ENCODE measurements at regions of chr7 and their contacts with region 1.

Region 1: DNA sequence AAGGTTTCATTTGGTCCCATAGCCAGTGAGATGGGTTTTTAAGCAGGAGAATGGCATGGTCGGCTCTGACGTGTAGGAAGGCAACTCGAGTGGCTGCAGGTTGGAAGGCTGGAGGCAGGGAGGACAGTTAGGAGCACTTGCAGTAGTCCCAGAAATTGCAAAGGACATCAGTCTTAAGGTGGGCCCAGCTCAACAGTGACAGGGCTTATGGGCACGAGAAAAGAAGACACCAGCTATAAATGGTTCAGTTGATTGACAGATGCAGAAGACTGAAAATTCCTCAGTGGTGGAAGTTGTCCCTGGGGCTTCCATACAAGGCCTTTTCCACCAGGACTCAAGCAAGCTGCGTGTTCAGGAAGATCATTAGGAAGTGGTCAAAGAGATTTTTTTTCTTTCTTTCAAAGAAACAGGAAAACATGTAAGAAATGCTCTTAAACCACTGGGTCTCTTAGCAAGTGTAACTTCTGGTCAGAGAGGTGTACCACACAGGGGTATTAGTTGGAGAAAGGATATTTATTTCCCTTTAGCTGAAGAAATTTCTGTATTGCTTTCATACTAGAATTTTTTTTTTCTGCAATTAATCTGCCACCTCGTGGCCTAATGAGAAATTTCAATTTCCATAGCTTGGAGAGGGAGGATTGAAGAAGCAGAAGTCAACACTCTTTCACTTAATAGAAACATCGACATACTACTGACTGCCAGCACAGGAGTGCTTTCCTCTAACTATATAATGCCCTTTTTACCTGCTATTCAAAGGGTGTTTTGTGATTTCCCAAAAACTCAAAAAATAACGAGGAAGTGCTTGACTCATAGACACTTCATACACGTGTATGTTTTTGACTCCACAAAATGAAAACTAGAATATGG is 177.4 kb upstream of the NAMPT start:
- DNase-seq: peak in 1 of 2 experiments; percentile 29
- H3K4me3 ChIP-seq: no peak overlapping the region
- H3K4me1 ChIP-seq: no peaks in the 10 kb centered on the region
- H3K27me3 ChIP-seq: no peaks in the 10 kb centered on the region

Region 2: DNA sequence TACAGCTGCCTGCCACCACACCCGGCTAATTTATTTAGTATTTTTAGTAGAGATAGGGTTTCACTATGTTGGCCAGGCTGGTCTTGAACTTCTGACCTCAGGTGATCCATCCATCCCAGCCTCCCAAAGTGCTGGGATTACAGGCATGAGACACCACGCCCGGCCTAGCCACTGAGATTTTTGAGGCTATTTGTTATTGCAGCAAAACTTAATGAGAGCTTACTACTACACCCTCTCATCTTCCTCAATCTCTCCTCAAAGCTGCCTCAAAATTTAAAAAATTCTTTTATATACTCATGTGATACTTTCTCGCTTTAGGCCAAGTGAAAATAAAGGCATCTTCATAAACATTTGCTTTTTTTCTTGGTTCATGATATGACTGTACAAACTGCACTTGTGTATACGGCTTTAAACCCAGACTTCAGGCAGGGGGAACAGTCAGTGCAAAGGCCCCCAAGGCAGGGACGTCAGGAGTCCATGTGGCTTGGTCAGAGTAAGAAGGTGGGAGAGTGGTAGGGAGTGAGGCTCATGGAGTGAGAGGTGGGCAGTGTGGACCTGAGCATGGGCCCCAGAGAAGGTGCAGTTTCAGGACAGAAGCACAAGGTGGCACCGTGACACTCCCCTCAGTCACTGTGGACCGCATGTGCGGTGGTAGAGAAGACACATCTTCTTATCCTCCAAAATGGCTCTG is 405.6 kb before region 1 on chr7:
- in situ Hi-C with region 1: loop called (anchors 25 kb)
- DNase-seq: peak; percentile 76 to 82
- H3K4me3 ChIP-seq: no peak overlapping the region
- H3K4me1 ChIP-seq: no peaks in the 10 kb centered on the region
- H3K27me3 ChIP-seq: peaks cover 6% of the 10 kb centered on the region; the same call in 1 of the 2 replicates

Region 3: DNA sequence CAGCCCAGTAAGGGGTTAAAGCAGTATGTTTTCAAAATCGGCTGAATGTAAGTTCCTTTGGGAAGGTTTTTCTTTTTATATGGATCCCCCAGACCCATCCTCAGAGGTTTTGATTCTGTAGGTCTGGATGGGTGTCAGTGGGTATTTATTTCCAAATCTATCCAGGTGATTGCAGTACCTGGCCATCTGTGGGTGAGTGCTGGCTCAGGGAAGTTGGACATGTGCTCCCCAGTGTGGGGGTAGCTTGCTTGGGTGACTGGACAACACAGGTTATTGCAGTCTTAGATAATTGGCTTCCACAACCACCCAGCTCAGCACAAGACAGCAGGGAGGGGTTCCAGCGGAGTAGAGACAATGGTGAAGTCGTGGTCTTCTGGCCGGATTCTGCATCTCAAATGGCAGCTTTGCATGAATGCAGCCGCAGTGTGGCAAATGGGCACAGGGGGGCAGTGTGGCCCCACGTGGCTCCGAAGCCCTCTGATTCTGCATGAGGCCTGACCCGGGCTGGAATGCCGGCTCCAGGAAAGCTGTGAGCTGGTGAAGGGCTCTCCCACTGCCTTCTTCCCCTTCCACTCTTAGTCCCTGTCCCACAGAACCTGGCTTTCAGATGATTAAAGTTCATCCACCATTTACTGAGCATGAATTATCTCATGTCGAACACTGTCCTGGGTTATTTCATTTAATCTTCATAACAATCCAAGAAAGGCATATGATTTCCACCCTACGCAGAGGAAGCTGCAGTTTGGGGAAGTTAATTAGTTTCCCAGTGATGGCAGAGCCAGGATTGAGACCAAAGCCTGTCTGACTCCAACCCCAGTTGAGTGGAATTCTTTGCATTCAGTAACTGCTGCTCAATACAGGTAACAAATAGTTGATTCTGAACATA is 285.6 kb before region 1 on chr7:
- in situ Hi-C with region 1: loop called (anchors 5 kb)
- DNase-seq: peak; percentile 71 to 87
- H3K4me3 ChIP-seq: no peak overlapping the region
- H3K4me1 ChIP-seq: no peaks in the 10 kb centered on the region
- H3K27me3 ChIP-seq: peaks cover 6% of the 10 kb centered on the region

Measured in HAP-1 (cell line).